ENCODE measurements at regions of chr22 and their contacts with region 1.

Region 1: DNA sequence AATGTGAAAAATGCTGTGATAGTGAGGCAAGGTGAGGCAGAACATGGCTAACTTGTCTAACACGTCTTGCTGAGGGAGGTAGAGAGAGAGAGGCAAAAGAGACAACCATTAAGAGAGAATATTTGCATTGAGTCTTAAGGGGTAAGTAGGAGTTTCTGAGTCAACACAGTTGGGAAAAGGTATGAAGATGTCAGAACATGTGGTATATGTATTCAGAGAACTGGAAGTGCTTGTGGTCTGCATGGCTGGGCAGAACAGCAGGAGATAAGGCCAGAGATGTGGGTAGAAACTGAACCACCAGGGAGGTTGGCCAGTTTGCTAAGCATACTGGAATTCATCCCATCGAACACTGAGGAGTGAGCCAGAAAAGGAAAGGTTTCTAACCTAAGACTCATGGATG is 25.0 kb upstream of the SLC5A1 start:
- DNase-seq: no peak
- ATAC-seq: no peak
- H3K4me3 ChIP-seq: no peak overlapping the region
- H3K27ac ChIP-seq: no peak overlapping the region
- H3K4me1 ChIP-seq: no peaks in the 10 kb centered on the region
- H3K27me3 ChIP-seq: peaks cover 2% of the 10 kb centered on the region; the same call in 1 of the 2 replicates
- CTCF ChIP-seq: no peak
- POLR2A ChIP-seq: no peak
- RAD21 ChIP-seq: no peak

Region 2: GRCh38 chr22:31923136-31923535 is 94.9 kb before region 1 on chr22:
- CTCF ChIA-PET with region 1: no interaction called
- POLR2A ChIA-PET with region 1: no interaction called
- dilution Hi-C with region 1: no loop called
- in situ Hi-C with region 1: no loop called
- intact Hi-C with region 1: loop called (anchors 5 kb)
- DNase-seq: no peak
- ATAC-seq: no peak; the same call in 1 of the 2 replicates
- H3K4me3 ChIP-seq: no peak overlapping the region
- H3K27ac ChIP-seq: no peak overlapping the region
- H3K4me1 ChIP-seq: no peaks in the 10 kb centered on the region
- H3K27me3 ChIP-seq: peaks cover 20% of the 10 kb centered on the region
- CTCF ChIP-seq: no peak
- POLR2A ChIP-seq: no peak
- RAD21 ChIP-seq: no peak

Measured in IMR-90 (cell line).